Activated CD4-positive, alpha-beta T cell treated with anti-CD3 and anti-CD28 coated beads for 36 hours (primary cell): ENCODE measurements at regions of chr19 and their contacts with region 1.

Region 1: GRCh38 chr19:21912654-21913053 is 76.7 kb upstream of the ZNF43 start:
- DNase-seq: no peak
- ATAC-seq: no peak
- H3K4me3 Mint-ChIP-seq: no peak overlapping the region
- H3K27ac Mint-ChIP-seq: no peak overlapping the region
- H3K4me1 Mint-ChIP-seq: no peaks in the 10 kb centered on the region
- H3K27me3 Mint-ChIP-seq: no peaks in the 10 kb centered on the region

Region 2: GRCh38 chr19:21586311-21587116 is 326.1 kb before region 1 on chr19:
- CTCF ChIA-PET with region 1: no interaction called
- POLR2A ChIA-PET with region 1: no interaction called
- intact Hi-C with region 1: no loop called
- DNase-seq: peak; percentile 46
- ATAC-seq: peak; percentile 70
- H3K4me3 Mint-ChIP-seq: peak overlapping the region; percentile 67
- H3K27ac Mint-ChIP-seq: no peak overlapping the region
- H3K4me1 Mint-ChIP-seq: peaks cover 17% of the 10 kb centered on the region
- H3K27me3 Mint-ChIP-seq: no peaks in the 10 kb centered on the region

Region 3: GRCh38 chr19:22327321-22327720 is 414.7 kb after region 1 on chr19:
- CTCF ChIA-PET with region 1: no interaction called
- POLR2A ChIA-PET with region 1: no interaction called
- intact Hi-C with region 1: no loop called
- DNase-seq: no peak
- ATAC-seq: no peak
- H3K4me3 Mint-ChIP-seq: no peak overlapping the region
- H3K27ac Mint-ChIP-seq: no peak overlapping the region
- H3K4me1 Mint-ChIP-seq: no peaks in the 10 kb centered on the region
- H3K27me3 Mint-ChIP-seq: no peaks in the 10 kb centered on the region

Region 4: GRCh38 chr19:22545751-22546150 is 633.1 kb after region 1 on chr19:
- CTCF ChIA-PET with region 1: no interaction called
- POLR2A ChIA-PET with region 1: no interaction called
- intact Hi-C with region 1: loop called in 1 of 2 experiments (anchors 10 kb)
- DNase-seq: peak; percentile 65
- ATAC-seq: peak; percentile 47
- H3K4me3 Mint-ChIP-seq: no peak overlapping the region
- H3K27ac Mint-ChIP-seq: no peak overlapping the region
- H3K4me1 Mint-ChIP-seq: no peaks in the 10 kb centered on the region
- H3K27me3 Mint-ChIP-seq: no peaks in the 10 kb centered on the region